Colonic mucosa (tissue), 4 donors: ENCODE measurements at regions of chr2 and their contacts with region 1.

Region 1: DNA sequence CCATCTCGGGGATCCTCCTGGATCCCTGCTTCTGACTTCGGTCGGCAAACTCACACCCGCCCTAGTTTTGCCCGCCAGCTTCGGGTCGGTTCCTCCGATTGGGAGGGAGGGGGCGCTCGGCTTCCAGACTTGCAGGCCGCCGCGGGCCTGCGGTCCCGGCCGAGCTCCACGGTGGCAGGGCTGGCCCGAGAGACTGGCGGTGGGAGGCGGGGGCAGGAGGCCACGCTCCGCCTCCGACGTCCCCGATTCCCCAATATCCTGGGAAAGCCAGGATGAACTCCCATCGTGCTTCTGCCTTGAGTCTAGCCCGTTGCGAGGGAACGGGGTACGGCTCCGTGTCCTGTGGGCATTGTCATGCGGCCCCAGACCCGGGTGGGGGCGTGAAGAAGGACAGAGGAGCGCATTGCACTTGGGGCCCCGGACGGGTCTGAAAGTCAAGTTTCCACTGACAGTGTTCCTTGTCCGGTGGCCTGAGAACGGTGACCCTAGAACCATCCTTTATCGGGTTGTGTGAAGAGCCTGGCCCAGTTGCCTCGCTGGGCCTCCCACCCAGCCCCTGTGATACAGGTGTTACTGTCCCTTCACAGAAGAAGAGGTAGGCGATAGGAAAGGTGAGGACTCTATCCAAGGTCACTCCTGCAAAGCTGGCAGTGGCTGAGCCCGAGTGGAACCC is 2.4 kb upstream of the INHBB start:
- DNase-seq: peak; percentile 67
- H3K4me3 ChIP-seq: no peak overlapping the region
- H3K27ac ChIP-seq: no peak overlapping the region
- H3K4me1 ChIP-seq: peaks cover 12% of the 10 kb centered on the region
- H3K27me3 ChIP-seq: peaks cover 61% of the 10 kb centered on the region
- CTCF ChIP-seq: peak; percentile 44

Region 2: GRCh38 chr2:120552800-120553481 is 209.4 kb after region 1 on chr2:
- intact Hi-C with region 1: loop called (anchors 10 kb)
- DNase-seq: peak; percentile 87
- H3K4me3 ChIP-seq: no peak overlapping the region
- H3K27ac ChIP-seq: no peak overlapping the region
- H3K4me1 ChIP-seq: peaks cover 8% of the 10 kb centered on the region
- H3K27me3 ChIP-seq: no peaks in the 10 kb centered on the region
- CTCF ChIP-seq: peak; percentile 42

Region 3: DNA sequence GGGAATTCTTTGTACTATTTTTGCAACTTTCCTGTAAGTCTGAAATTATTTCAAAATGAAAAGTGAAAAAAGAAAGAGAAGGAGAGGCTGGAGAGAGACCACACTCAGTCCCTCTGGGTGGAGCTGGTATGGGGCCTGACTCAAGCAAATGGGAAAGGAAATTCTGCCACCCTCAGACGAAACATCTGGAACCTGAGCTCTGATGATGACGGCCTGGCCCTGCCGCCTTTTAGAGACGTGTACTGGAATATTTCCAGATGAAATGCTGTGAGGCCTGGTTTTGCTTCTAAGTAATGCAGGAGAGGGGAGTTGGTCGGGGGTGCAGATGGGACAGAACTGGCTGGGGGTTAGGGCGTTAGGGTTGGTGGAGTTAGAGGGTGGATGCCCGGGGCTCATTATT is 334.7 kb after region 1 on chr2:
- intact Hi-C with region 1: loop called (anchors 2 kb)
- DNase-seq: no peak
- H3K4me3 ChIP-seq: no peak overlapping the region
- H3K27ac ChIP-seq: no peak overlapping the region
- H3K4me1 ChIP-seq: no peaks in the 10 kb centered on the region
- H3K27me3 ChIP-seq: no peaks in the 10 kb centered on the region
- CTCF ChIP-seq: no peak